Activated CD8-positive, alpha-beta T cell treated with anti-CD3 and anti-CD28 coated beads for 36 hours (primary cell): ENCODE measurements at regions of chr1 and their contacts with region 1.

Region 1: GRCh38 chr1:116168277-116169097 is 57.3 kb downstream of the MAB21L3 start:
- DNase-seq: peak; percentile 89
- ATAC-seq: peak; percentile 99
- H3K4me3 Mint-ChIP-seq: peak overlapping the region; percentile 67
- H3K27ac Mint-ChIP-seq: peak overlapping the region; percentile 74
- H3K4me1 Mint-ChIP-seq: peaks cover 9% of the 10 kb centered on the region
- H3K27me3 Mint-ChIP-seq: no peaks in the 10 kb centered on the region
- CTCF ChIP-seq: peak; percentile 95

Region 2: DNA sequence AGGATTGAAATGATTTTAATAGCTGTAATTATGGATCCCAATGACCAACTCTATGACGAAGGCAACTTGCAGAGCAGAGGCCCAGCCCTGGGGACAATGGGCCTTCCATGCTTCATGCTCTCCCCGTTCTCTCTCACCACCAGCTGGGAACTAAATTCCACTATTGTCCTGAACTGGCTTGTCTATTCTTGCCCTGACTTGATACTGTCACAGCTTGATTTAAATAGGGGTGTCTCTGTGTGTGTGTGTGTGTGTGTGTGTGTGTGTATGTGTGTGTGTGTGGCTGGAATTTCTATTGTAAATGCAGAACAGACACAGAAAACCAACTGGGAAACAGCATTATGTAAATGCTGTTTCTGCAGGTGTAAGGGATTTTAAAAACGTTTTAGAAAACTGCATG is 135.2 kb before region 1 on chr1:
- CTCF ChIA-PET with region 1: no interaction called
- POLR2A ChIA-PET with region 1: no interaction called
- intact Hi-C with region 1: no loop called
- DNase-seq: no peak
- ATAC-seq: no peak
- H3K4me3 Mint-ChIP-seq: no peak overlapping the region
- H3K27ac Mint-ChIP-seq: no peak overlapping the region
- H3K4me1 Mint-ChIP-seq: no peaks in the 10 kb centered on the region
- H3K27me3 Mint-ChIP-seq: peaks cover 2% of the 10 kb centered on the region
- CTCF ChIP-seq: no peak

Region 3: DNA sequence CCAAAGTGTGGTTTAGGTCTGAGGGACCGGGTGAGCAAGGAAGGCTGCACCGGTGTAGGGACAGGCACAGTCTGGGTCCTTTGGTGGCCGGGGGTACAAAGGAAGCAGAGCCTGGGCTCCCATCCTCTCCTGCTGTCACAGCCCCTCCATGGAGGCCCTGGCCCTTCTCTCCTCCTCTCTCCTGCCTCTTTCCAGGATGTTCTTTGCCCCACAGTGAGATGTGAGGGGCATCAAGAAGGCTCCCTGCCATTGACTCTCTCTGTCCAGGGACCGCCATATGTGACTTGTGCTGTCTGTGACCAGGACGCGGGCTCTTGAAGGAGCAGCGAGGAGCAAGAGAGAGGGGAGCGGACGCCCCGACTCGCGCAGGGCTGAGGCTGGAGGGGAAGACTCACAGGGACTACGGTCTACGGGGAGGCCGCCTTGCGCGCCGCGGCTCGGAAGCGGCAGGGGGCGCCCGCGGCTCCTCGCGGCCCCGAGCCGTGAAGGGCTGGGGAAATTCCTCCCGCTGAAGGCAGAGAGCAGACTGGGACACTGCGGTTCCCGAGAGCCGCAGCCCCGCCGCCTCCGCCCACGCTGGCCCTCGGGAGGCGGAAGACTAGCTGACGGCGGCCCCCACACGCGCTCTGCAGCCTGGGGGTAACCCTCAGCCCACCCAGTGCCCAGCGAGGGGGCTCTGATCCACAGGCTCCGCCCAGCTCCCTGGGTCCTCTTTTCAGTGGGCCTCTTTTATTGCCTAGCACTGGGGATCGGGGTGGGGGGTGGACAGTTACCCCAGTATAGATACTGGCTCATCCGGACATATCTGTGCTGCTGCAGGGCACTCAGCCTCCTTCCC is 16.5 kb before region 1 on chr1:
- CTCF ChIA-PET with region 1: interaction called, 77 read pairs
- POLR2A ChIA-PET with region 1: interaction called, 3 read pairs
- intact Hi-C with region 1: no loop called
- DNase-seq: peak; percentile 85
- ATAC-seq: peak; percentile 97
- H3K4me3 Mint-ChIP-seq: peak overlapping the region; percentile 62
- H3K27ac Mint-ChIP-seq: peak overlapping the region; percentile 65
- H3K4me1 Mint-ChIP-seq: peaks cover 22% of the 10 kb centered on the region
- H3K27me3 Mint-ChIP-seq: no peaks in the 10 kb centered on the region
- CTCF ChIP-seq: peak; percentile 91

Region 4: GRCh38 chr1:116257341-116257767 is 88.9 kb after region 1 on chr1:
- CTCF ChIA-PET with region 1: no interaction called
- POLR2A ChIA-PET with region 1: no interaction called
- intact Hi-C with region 1: loop called (anchors 10 kb)
- DNase-seq: peak; percentile 74
- ATAC-seq: peak; percentile 73
- H3K4me3 Mint-ChIP-seq: no peak overlapping the region
- H3K27ac Mint-ChIP-seq: no peak overlapping the region
- H3K4me1 Mint-ChIP-seq: peaks cover 56% of the 10 kb centered on the region
- H3K27me3 Mint-ChIP-seq: no peaks in the 10 kb centered on the region
- CTCF ChIP-seq: no peak